ENCODE measurements at regions of chr17 and their contacts with region 1.

Region 1: DNA sequence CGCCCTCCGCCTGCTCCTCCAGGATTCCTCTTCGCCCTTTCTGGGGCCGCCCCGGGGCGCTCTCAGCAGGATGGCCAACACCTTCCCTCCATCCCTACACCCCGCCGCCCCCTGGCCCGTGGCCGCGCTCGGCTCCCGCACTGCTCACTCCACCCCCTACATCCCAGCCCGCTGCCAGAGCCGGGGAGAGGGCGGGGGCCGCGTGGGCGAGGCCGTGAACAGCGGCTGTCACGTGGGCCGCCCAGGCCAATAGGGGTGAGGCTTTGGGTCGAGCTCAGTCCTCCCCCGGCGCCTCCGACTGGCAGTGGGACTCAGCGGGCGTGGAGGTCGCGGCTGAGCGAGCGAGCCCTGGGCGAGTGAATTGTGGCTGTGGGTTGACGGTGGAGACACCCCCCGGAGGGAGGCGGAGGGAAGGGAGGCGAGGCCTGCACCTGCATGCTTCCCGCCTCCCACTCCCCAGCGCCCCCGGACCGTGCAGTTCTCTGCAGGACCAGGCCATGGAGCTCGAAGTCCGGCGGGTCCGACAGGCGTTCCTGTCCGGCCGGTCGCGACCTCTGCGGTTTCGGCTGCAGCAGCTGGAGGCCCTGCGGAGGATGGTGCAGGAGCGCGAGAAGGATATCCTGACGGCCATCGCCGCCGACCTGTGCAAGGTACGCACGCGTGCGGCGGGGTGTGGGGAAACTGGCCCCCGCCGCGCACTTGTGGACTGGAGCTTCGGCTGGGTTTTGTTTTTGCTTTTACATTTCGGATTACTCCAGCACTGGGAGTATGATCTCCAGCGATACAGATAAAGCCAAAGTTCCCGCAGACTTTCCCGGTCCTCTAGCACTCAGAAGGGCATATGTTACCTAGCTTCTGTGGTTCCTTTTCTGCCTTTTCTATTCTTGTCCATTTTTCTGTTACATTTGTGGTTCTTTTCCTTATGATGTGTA is at the start of gene ALDH3A2:
- DNase-seq: peak; percentile 100
- H3K4me3 ChIP-seq: peak within 1 kb of the TSS; percentile 36 to 100 (median 92)
- H3K27ac ChIP-seq: peak within 1 kb of the TSS; percentile 90 to 98 (median 95)
- H3K4me1 ChIP-seq: peaks cover 18 to 69% (median 53%) of the 10 kb centered on the region in 6 donors
- H3K27me3 ChIP-seq: no peaks in the 10 kb centered on the region
- CTCF ChIP-seq: peak in 7 of 11 experiments; percentile 11 to 49 (median 26)
- POLR2A ChIP-seq: peak in 2 of 3 donors; percentile 68 to 94
- total RNA-seq, gene ALDH3A2: 26.7 to 73.1 (median 68.1) TPM

Region 2: DNA sequence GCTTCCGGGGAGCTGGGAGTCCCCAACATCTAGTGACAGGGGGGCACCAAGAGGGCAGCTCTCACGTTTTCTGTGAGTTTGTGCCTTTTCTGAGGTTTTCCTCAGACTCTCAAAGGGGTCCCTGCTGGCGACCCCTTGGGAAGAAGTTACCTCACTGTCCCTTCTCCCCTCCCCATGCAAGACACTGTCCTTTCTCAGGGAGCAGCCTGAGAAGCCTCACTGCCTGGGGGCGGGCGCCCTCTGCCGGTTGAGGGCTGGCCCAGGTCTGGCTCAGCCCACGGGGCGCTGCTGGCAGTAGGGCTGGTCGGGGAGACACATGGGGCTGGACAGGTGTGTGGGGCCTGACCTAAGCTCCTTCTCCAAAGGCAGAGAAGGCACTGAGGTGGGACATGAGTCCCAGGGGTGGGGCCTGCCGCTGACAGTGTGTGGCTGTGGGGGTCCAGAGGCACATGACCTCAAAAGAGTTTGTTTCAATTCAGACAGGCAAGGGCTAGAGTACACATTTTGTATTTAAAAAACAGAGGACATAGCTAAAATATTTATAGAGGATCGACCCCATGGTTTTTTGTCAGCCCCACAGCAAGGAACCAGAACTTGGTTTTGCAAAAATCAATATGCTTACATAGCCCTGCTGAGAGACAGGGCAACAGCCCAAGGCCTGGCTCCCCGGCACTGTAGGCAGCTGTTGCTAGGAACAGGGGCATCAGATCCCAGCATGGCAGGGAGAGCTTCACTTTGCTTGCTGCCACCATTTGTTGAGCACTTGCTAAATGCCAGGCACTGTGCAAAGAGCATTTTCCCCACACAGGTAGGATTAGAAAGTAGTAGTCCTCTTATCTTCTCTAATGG is 117.9 kb after region 1 on chr17:
- intact Hi-C with region 1: loop called (anchors 10 kb)
- DNase-seq: peak; percentile 94
- H3K4me3 ChIP-seq: no peak overlapping the region
- H3K27ac ChIP-seq: no peak overlapping the region
- H3K4me1 ChIP-seq: peaks cover 0 to 22% (median 9%) of the 10 kb centered on the region in 6 donors
- H3K27me3 ChIP-seq: no peaks in the 10 kb centered on the region
- CTCF ChIP-seq: peak; percentile 84 to 96 (median 90)
- POLR2A ChIP-seq: no peak

Measured in spleen (tissue), 13 donors.